ENCODE measurements at regions of chr7 and their contacts with region 1.

Region 1: DNA sequence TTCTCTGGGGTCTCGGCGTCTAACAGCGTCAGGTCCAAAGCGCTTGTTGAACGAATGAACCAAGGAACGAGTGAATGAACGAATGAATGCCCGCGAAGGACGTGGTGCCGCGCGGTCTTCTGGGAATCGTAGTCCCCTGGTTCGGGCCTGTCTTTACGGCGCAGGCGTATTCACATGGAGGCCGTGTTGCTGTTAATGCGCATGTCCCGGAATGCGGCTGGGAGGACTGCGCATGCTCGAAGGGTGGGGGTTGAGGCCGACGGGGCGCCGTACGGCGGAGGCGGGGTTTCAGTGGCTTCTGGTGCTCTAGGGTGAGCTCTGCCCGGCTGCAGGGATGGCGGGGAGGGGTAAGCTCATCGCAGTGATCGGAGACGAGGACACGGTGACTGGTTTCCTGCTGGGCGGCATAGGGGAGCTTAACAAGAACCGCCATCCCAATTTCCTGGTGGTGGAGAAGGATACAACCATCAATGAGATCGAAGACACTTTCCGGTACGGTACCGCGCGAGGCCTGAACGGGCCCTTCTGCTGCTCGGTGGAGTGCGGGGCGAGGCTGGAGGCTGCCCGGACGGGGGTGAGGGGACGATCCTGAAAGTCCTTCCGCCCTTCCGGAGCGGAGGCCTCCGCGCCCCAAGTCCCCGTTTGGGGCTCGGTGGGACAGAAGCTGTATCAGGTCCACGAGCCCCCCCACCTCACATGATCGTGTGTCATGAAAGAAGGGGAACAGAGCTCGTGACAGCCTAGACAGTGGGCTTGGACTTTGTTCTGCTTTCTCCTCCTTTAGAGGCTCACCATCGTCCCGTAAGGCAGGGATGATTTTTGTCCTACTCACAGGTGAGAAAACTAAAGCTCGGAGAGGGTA is at the start of gene ATP6V1F:
- DNase-seq: peak; percentile 97 to 98 (median 98)
- H3K4me3 ChIP-seq: peak within 1 kb of the TSS; percentile 70 to 96 (median 87)
- H3K4me3 Mint-ChIP-seq: peak within 1 kb of the TSS; percentile 98 to 100
- H3K27ac ChIP-seq: peak within 1 kb of the TSS; percentile 99
- H3K27ac Mint-ChIP-seq: peak within 1 kb of the TSS; percentile 99 to 100 (median 99)
- H3K4me1 ChIP-seq: peaks cover 11 to 14% of the 10 kb centered on the region in 2 donors
- H3K4me1 Mint-ChIP-seq: peaks cover 19% of the 10 kb centered on the region
- H3K27me3 ChIP-seq: no peaks in the 10 kb centered on the region
- H3K27me3 Mint-ChIP-seq: peaks cover 2 to 8% (median 5%) of the 10 kb centered on the region in 3 donors
- CTCF ChIP-seq: no peak
- polyA plus RNA-seq, gene ATP6V1F: 327 to 593 (median 511) TPM

Region 2: GRCh38 chr7:128740996-128741395 is 121.8 kb before region 1 on chr7:
- intact Hi-C with region 1: loop called in 1 of 2 experiments (anchors 10 kb)
- DNase-seq: no peak
- H3K4me3 ChIP-seq: no peak overlapping the region
- H3K4me3 Mint-ChIP-seq: peak overlapping the region in 1 of 2 donors; percentile 42
- H3K27ac ChIP-seq: no peak overlapping the region
- H3K27ac Mint-ChIP-seq: peak overlapping the region in 1 of 7 donors; percentile 38
- H3K4me1 ChIP-seq: peaks cover 21 to 31% of the 10 kb centered on the region in 2 donors
- H3K4me1 Mint-ChIP-seq: peaks cover 33% of the 10 kb centered on the region
- H3K27me3 ChIP-seq: no peaks in the 10 kb centered on the region
- H3K27me3 Mint-ChIP-seq: peaks cover 0 to 2% (median 0%) of the 10 kb centered on the region in 3 donors
- CTCF ChIP-seq: no peak

Region 3: GRCh38 chr7:128841921-128842651 is 20.7 kb before region 1 on chr7:
- intact Hi-C with region 1: no loop called
- DNase-seq: peak; percentile 34 to 61 (median 45)
- H3K4me3 ChIP-seq: no peak overlapping the region
- H3K4me3 Mint-ChIP-seq: peak overlapping the region in 1 of 2 donors; percentile 30
- H3K27ac ChIP-seq: no peak overlapping the region
- H3K27ac Mint-ChIP-seq: no peak overlapping the region
- H3K4me1 ChIP-seq: no peaks in the 10 kb centered on the region
- H3K4me1 Mint-ChIP-seq: peaks cover 3% of the 10 kb centered on the region
- H3K27me3 ChIP-seq: no peaks in the 10 kb centered on the region
- H3K27me3 Mint-ChIP-seq: peaks cover 3 to 5% (median 5%) of the 10 kb centered on the region in 3 donors
- CTCF ChIP-seq: peak; percentile 97

Region 4: GRCh38 chr7:128934361-128935341 is 71.8 kb after region 1 on chr7:
- intact Hi-C with region 1: loop called in 1 of 2 experiments (anchors 2 kb)
- DNase-seq: peak; percentile 76 to 92 (median 91)
- H3K4me3 ChIP-seq: peak overlapping the region; percentile 1 to 41 (median 1)
- H3K4me3 Mint-ChIP-seq: peak overlapping the region; percentile 68 to 83
- H3K27ac ChIP-seq: peak overlapping the region; percentile 85 to 91
- H3K27ac Mint-ChIP-seq: peak overlapping the region; percentile 92 to 100 (median 98)
- H3K4me1 ChIP-seq: peaks cover 62 to 64% of the 10 kb centered on the region in 2 donors
- H3K4me1 Mint-ChIP-seq: peaks cover 64% of the 10 kb centered on the region
- H3K27me3 ChIP-seq: no peaks in the 10 kb centered on the region
- H3K27me3 Mint-ChIP-seq: peaks cover 0 to 4% (median 0%) of the 10 kb centered on the region in 3 donors
- CTCF ChIP-seq: no peak

Measured in CD14-positive monocyte (primary cell).